PC-3 (cell line): ENCODE measurements at regions of chr2 and their contacts with region 1.

Region 1: DNA sequence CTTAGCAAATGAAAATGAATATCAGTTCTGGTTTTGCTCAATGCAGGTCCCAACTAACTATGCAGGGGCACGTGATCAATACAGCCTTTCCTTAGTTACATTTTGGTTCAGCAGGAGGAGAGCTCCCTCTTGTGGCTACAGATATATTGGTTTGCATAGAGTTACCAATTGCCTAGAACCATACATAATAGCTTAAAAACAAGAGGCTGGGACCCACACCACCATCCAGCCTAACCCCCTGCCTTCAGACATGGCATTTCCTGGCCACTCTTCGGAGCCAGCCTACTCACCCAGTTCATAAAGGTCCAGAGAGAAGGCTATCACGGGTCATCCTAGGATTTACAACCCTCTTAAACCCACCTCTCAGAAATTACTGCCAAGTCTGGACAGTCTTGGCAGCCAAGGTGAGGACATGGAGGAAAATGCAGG is 10.5 kb downstream of the CCDC93 start:
- DNase-seq: peak; percentile 85
- ATAC-seq: peak; percentile 99
- H3K4me3 ChIP-seq: no peak overlapping the region
- H3K27ac ChIP-seq: no peak overlapping the region
- H3K4me1 ChIP-seq: no peaks in the 10 kb centered on the region
- H3K27me3 ChIP-seq: no peaks in the 10 kb centered on the region
- CTCF ChIP-seq: peak; percentile 88

Region 2: DNA sequence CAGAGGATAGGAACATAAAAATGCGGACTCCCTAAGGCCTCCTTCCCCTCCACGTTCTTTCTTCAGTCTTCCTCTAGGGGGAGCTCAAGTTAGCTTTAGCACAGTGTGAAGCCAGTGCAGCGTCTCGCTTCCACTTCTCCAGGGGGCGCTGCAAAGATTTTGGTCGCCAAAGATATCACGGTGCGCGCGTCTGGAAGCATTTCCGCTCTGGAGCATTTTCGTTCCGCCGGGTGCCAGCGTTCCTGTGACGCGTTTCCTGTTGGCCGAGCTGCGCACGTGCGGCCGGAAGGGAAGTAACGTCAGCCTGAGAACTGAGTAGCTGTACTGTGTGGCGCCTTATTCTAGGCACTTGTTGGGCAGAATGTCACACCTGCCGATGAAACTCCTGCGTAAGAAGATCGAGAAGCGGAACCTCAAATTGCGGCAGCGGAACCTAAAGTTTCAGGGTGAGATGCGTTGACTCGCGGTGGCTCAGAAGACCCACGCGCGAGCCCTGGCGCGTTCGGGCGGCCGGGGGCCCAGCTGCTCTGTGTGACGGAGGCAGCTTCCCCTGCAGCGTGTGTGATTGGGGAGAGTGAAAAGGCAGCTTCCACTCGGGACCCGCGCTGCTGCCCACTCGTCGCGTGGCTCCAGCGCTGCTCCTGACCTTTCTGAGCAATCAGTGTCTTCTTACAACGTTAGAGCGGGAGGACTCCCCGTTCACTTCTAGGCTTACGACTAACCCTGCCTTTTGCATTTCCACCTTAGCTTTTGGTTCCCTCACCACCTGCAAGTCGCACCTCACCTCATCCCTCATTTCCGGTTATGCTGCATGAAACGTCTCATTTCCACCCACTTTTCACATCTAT is 188.8 kb before region 1 on chr2 and contains the start of gene DDX18:
- CTCF ChIA-PET with region 1: interaction called, 25 read pairs
- POLR2A ChIA-PET with region 1: no interaction called
- intact Hi-C with region 1: loop called (anchors 1 kb)
- DNase-seq: peak; percentile 98
- ATAC-seq: peak; percentile 93
- H3K4me3 ChIP-seq: peak within 1 kb of the TSS; percentile 94
- H3K27ac ChIP-seq: peak within 1 kb of the TSS; percentile 68
- H3K4me1 ChIP-seq: peaks cover 19% of the 10 kb centered on the region
- H3K27me3 ChIP-seq: no peaks in the 10 kb centered on the region
- CTCF ChIP-seq: peak; percentile 99
- total RNA-seq, gene DDX18: 40.3 and 42.8 TPM in 2 replicates

Region 3: GRCh38 chr2:117835990-117836760 is 167.2 kb before region 1 on chr2:
- CTCF ChIA-PET with region 1: interaction called, 3 read pairs
- POLR2A ChIA-PET with region 1: no interaction called
- intact Hi-C with region 1: loop called (anchors 5 kb)
- DNase-seq: peak; percentile 35
- ATAC-seq: peak; percentile 64
- H3K4me3 ChIP-seq: no peak overlapping the region
- H3K27ac ChIP-seq: no peak overlapping the region
- H3K4me1 ChIP-seq: no peaks in the 10 kb centered on the region
- H3K27me3 ChIP-seq: no peaks in the 10 kb centered on the region
- CTCF ChIP-seq: peak; percentile 64

Region 4: DNA sequence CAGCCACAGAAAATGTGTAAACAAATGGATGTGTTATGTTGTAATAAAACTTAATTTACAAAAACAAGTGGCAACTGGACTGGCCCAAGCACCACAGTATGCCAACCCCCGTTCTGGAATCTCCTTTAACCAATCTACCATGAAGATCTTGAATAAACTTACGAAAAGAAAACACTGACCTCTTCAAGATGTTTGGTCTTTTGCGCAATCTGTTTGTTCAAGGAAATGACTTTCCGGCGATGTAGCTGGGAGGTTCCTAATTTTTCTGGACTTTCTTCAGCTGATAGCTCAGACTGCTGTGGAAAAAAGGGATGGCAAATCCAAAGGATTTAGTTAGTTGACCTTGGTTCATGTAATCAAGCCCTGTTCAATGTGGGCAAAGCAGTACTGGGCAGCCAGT is 45.2 kb before region 1 on chr2:
- CTCF ChIA-PET with region 1: interaction called, 10 read pairs
- POLR2A ChIA-PET with region 1: no interaction called
- intact Hi-C with region 1: loop called (anchors 1 kb)
- DNase-seq: peak; percentile 93
- ATAC-seq: peak; percentile 82
- H3K4me3 ChIP-seq: no peak overlapping the region; the same call in 1 of the 2 replicates
- H3K27ac ChIP-seq: peak overlapping the region; percentile 83
- H3K4me1 ChIP-seq: peaks cover 26% of the 10 kb centered on the region
- H3K27me3 ChIP-seq: no peaks in the 10 kb centered on the region
- CTCF ChIP-seq: no peak

Region 5: DNA sequence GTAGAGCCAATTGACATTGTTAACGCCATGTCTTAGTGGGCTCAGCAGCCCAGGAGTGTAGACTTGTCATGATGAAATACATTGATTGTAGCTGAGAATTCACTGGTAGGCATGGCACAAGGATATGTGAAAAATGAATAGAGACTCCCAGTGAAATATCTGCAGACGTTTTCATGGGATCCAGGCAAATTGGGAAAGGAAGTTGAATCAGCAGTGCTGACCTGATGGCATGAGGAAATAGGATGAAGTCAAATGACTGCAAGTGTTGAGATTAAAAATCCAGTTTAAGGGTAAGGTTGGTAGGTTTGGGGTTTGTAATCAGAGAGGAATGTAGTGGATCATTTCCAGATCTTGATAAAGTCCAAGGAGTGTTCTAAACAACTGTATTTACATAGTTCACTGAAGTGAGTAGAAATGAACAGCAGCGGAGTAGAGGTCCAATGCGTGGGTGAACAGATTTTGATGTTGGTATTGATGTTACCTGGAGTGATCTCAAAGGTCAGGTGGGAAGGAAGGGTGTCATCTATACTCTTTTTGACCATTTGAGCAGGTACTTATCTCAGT is 109.4 kb after region 1 on chr2:
- CTCF ChIA-PET with region 1: no interaction called
- POLR2A ChIA-PET with region 1: no interaction called
- intact Hi-C with region 1: no loop called
- DNase-seq: peak; percentile 99
- ATAC-seq: peak; percentile 96
- H3K4me3 ChIP-seq: no peak overlapping the region
- H3K27ac ChIP-seq: peak overlapping the region; percentile 98
- H3K4me1 ChIP-seq: peaks cover 33% of the 10 kb centered on the region
- H3K27me3 ChIP-seq: no peaks in the 10 kb centered on the region
- CTCF ChIP-seq: no peak

Region 6: GRCh38 chr2:118242216-118242615 is 238.8 kb after region 1 on chr2:
- CTCF ChIA-PET with region 1: no interaction called
- POLR2A ChIA-PET with region 1: no interaction called
- intact Hi-C with region 1: no loop called
- DNase-seq: peak; percentile 96
- ATAC-seq: peak; percentile 95
- H3K4me3 ChIP-seq: no peak overlapping the region
- H3K27ac ChIP-seq: peak overlapping the region; percentile 76
- H3K4me1 ChIP-seq: peaks cover 46% of the 10 kb centered on the region
- H3K27me3 ChIP-seq: no peaks in the 10 kb centered on the region
- CTCF ChIP-seq: no peak

Region 7: GRCh38 chr2:118443596-118443995 is 440.2 kb after region 1 on chr2:
- CTCF ChIA-PET with region 1: no interaction called
- POLR2A ChIA-PET with region 1: no interaction called
- intact Hi-C with region 1: no loop called
- DNase-seq: peak; percentile 77
- ATAC-seq: peak; percentile 71
- H3K4me3 ChIP-seq: no peak overlapping the region
- H3K27ac ChIP-seq: 0 out of 2 replicates have a peak overlapping the region, but pooled peaks have one; percentile 17
- H3K4me1 ChIP-seq: peaks cover 12% of the 10 kb centered on the region
- H3K27me3 ChIP-seq: 0 out of 2 replicates have a peak, but pooled peaks cover 8% of the 10 kb centered on the region
- CTCF ChIP-seq: no peak